ENCODE measurements at regions of chr5 and their contacts with region 1.

Region 1: DNA sequence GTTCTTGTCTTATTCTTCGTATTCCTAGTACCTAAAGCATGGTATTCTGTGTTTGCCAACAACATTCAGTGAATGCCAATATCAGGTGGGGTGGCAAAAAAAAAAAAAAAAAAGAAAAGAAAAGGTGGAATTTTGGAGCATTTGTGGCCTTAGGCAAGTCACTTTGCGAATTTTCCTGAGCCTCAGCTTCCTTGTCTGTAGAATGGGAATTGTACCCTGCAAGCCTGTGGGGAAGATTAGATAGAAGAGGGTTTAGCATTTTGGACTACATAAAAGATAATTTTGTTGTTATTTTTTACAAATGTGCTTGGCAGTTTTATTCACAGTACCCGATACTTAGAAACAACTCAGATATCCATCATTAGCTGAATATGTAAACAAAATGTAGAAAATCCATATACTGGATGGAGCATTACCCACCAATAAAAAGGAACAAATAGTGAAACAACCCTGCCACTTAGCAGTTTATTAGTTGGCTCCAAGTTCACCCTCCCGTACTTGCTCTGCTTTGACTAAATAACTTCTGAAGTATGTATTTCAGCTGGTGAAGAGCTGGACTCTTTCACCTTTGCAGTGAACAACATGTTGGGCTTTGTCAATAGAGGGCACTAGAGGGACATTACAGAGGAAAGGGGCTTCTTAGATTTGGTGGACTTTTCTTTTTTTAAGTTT is 13.6 kb downstream of the UBE2D2 start:
- DNase-seq: no peak
- ATAC-seq: peak; percentile 23
- H3K4me3 Mint-ChIP-seq: no peak overlapping the region
- H3K27ac Mint-ChIP-seq: no peak overlapping the region
- H3K4me1 Mint-ChIP-seq: peaks cover 79% of the 10 kb centered on the region
- H3K27me3 Mint-ChIP-seq: no peaks in the 10 kb centered on the region

Region 2: DNA sequence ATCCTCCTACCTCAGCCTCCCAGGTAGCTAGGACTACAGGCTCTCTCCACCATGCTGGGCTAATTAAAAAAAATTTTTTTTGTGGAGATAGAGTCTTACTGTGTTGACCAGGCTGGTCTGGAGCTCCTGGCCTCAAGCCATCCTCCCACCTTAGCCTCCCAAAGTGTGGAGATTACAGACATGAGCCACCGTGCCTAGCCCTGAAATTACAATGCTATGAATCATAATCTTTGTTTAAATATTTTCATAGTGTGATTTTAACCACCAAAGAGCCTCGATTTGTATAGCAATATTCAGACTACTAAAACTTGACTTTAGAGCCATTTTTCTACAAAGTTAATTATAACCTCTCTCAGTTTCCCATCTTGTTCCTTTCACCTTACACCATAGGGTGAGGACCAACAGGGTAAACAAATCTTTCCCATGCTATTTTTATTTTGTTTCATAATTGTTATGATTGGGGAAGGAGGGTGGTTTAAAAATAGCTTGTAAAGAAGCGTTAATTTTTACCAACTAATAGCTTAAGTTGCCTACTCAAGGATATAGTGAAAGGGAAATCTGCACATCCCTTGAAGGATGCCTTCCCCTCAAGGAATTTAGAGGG is 19.0 kb after region 1 on chr5:
- CTCF ChIA-PET with region 1: interaction called, 11 read pairs
- POLR2A ChIA-PET with region 1: interaction called, 8 read pairs
- intact Hi-C with region 1: no loop called
- DNase-seq: peak; percentile 28
- ATAC-seq: peak; percentile 62
- H3K4me3 Mint-ChIP-seq: no peak overlapping the region
- H3K27ac Mint-ChIP-seq: no peak overlapping the region
- H3K4me1 Mint-ChIP-seq: peaks cover 41% of the 10 kb centered on the region
- H3K27me3 Mint-ChIP-seq: no peaks in the 10 kb centered on the region

Region 3: GRCh38 chr5:139611703-139612584 is 37.2 kb after region 1 on chr5:
- CTCF ChIA-PET with region 1: interaction called, 6 read pairs
- POLR2A ChIA-PET with region 1: interaction called, 9 read pairs
- intact Hi-C with region 1: loop called in 1 of 2 experiments (anchors 5 kb)
- DNase-seq: peak; percentile 41
- ATAC-seq: peak; percentile 90
- H3K4me3 Mint-ChIP-seq: no peak overlapping the region
- H3K27ac Mint-ChIP-seq: peak overlapping the region; percentile 48
- H3K4me1 Mint-ChIP-seq: peaks cover 24% of the 10 kb centered on the region
- H3K27me3 Mint-ChIP-seq: no peaks in the 10 kb centered on the region